ENCODE measurements at regions of chr21 and their contacts with region 1.

Region 1: GRCh38 chr21:33815143-33815707 is 100.4 kb downstream of the ATP5PO start:
- DNase-seq: no peak
- ATAC-seq: no peak
- H3K4me3 ChIP-seq: no peak overlapping the region
- H3K27ac ChIP-seq: no peak overlapping the region
- H3K4me1 ChIP-seq: no peaks in the 10 kb centered on the region
- H3K27me3 ChIP-seq: no peaks in the 10 kb centered on the region
- CTCF ChIP-seq: no peak

Region 2: GRCh38 chr21:33825915-33826314 is 10.7 kb after region 1 on chr21:
- CTCF ChIA-PET with region 1: no interaction called
- POLR2A ChIA-PET with region 1: interaction called, 20 read pairs
- in situ Hi-C with region 1: no loop called
- intact Hi-C with region 1: no loop called
- DNase-seq: no peak
- ATAC-seq: no peak
- H3K4me3 ChIP-seq: no peak overlapping the region
- H3K27ac ChIP-seq: no peak overlapping the region
- H3K4me1 ChIP-seq: no peaks in the 10 kb centered on the region
- H3K27me3 ChIP-seq: no peaks in the 10 kb centered on the region
- CTCF ChIP-seq: no peak

Measured in Panc1 (cell line).